Activated CD4-positive, alpha-beta memory T cell treated with anti-CD3 and anti-CD28 coated beads for 36 hours (primary cell): ENCODE measurements at regions of chrX and their contacts with region 1.

Region 1: GRCh38 chrX:47958761-47959342 is 44.9 kb downstream of the ZNF182 start:
- DNase-seq: peak; percentile 17
- H3K4me3 Mint-ChIP-seq: no peak overlapping the region
- H3K27ac Mint-ChIP-seq: no peak overlapping the region
- H3K4me1 Mint-ChIP-seq: no peaks in the 10 kb centered on the region
- H3K27me3 Mint-ChIP-seq: no peaks in the 10 kb centered on the region

Region 2: DNA sequence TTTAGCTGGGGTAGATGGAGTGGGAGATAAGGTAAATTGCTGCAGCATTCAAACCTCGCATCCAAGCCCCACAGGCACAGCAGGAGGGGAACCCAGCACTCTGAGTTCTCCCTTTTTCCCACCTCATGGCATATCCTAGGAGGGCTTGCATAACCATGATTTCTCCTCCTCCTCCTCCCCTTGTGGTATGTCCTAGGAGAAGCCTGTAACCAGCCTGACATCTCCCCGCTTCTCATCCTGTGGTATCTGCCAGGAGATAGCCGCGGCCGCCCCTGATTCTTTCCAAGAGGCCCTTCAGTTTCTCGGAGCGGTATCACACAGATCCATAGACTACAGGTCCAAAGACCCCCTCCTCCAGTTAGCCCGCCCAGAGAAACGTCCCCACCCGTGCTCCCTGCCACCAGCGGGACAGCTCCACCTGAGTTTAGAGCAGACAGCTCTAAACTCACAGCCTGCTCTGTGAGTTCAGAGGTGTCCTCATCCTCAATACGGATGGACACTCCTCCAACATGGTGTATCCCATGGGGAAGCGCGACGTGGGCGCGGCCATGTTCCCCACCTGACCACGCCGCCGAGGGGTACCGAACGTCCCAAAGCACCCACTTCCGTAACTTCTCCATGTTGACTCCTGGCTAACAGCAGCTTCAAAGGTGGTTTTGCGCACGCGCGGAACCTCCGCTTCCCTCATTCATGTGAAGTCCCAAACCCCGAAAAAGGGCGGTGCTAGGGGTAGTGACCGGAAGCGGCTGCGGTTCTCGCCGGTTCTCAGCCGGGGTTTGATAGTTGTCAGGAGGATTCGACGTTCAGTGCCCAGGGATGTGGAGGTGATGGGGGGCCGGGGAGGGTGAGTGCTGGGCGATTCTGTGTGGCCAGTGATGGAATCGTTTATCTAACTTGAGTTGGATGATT is 122.4 kb before region 1 on chrX and contains the start of gene ZNF81:
- CTCF ChIA-PET with region 1: no interaction called
- POLR2A ChIA-PET with region 1: no interaction called
- intact Hi-C with region 1: loop called (anchors 10 kb)
- DNase-seq: peak; percentile 95
- H3K4me3 Mint-ChIP-seq: peak within 1 kb of the TSS; percentile 97
- H3K27ac Mint-ChIP-seq: peak within 1 kb of the TSS; percentile 97
- H3K4me1 Mint-ChIP-seq: peaks cover 19% of the 10 kb centered on the region
- H3K27me3 Mint-ChIP-seq: no peaks in the 10 kb centered on the region
- total RNA-seq, gene ZNF81: 6.0 to 7.2 TPM

Region 3: GRCh38 chrX:48003758-48004457 is 45.1 kb after region 1 on chrX and contains the start of gene ZNF182:
- CTCF ChIA-PET with region 1: no interaction called
- POLR2A ChIA-PET with region 1: no interaction called
- intact Hi-C with region 1: no loop called
- DNase-seq: peak; percentile 94
- H3K4me3 Mint-ChIP-seq: peak within 1 kb of the TSS; percentile 87
- H3K27ac Mint-ChIP-seq: peak within 1 kb of the TSS; percentile 96
- H3K4me1 Mint-ChIP-seq: peaks cover 21% of the 10 kb centered on the region
- H3K27me3 Mint-ChIP-seq: no peaks in the 10 kb centered on the region
- total RNA-seq, gene ZNF182: 6.5 to 7.1 TPM